ENCODE measurements at regions of chr4 and their contacts with region 1.

Region 1: GRCh38 chr4:150010525-150011126 is 67.6 kb upstream of the DCLK2 start:
- DNase-seq: peak; percentile 67
- H3K4me3 ChIP-seq: no peak overlapping the region
- H3K27ac ChIP-seq: no peak overlapping the region
- H3K4me1 ChIP-seq: peaks cover 38% of the 10 kb centered on the region
- H3K27me3 ChIP-seq: no peaks in the 10 kb centered on the region

Region 2: GRCh38 chr4:150242820-150243458 is 232.3 kb after region 1 on chr4:
- in situ Hi-C with region 1: loop called (anchors 10 kb)
- DNase-seq: peak; percentile 49
- H3K4me3 ChIP-seq: no peak overlapping the region
- H3K27ac ChIP-seq: no peak overlapping the region
- H3K4me1 ChIP-seq: peaks cover 24% of the 10 kb centered on the region
- H3K27me3 ChIP-seq: no peaks in the 10 kb centered on the region

Measured in GM23248 (cell line).